Pancreas (tissue), 10 donors: ENCODE measurements at regions of chr6 and their contacts with region 1.

Region 1: GRCh38 chr6:55953335-55953734 is 77.9 kb upstream of the BMP5 start:
- DNase-seq: no peak
- ATAC-seq: peak; percentile 50 to 82 (median 78)
- H3K4me3 ChIP-seq: no peak overlapping the region
- H3K27ac ChIP-seq: no peak overlapping the region
- H3K4me1 ChIP-seq: peaks cover 0 to 5% (median 0%) of the 10 kb centered on the region in 3 donors
- H3K27me3 ChIP-seq: peaks cover 0 to 4% (median 0%) of the 10 kb centered on the region in 4 donors
- CTCF ChIP-seq: peak in 3 of 4 donors; percentile 7 to 20 (median 17)

Region 2: DNA sequence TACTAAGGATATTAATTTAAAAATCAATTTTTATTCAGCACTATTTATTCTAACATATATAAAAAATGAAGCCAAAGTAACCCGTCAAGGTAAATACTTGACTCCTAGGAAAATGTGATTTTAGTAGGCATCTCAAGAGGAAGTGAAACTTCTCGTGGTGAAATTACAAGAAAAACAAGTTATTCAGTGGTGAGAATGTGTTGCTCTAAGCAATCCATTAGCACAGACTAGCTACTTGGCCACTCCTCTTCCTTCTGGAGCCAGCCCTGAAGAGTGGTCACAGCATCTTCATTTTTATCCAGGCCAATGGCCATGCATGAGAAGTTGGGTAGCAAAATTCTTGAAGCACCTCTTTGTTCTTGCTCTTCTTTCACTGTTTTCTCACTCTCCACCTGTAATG is 666.5 kb before region 1 on chr6:
- intact Hi-C with region 1: loop called in 1 of 3 experiments (anchors 10 kb)
- DNase-seq: no peak
- ATAC-seq: no peak
- H3K4me3 ChIP-seq: no peak overlapping the region
- H3K27ac ChIP-seq: no peak overlapping the region
- H3K4me1 ChIP-seq: no peaks in the 10 kb centered on the region
- H3K27me3 ChIP-seq: no peaks in the 10 kb centered on the region
- CTCF ChIP-seq: no peak

Region 3: GRCh38 chr6:55445648-55446204 is 507.6 kb before region 1 on chr6:
- intact Hi-C with region 1: loop called in 1 of 3 experiments (anchors 10 kb)
- DNase-seq: no peak
- ATAC-seq: peak in 3 of 4 donors; percentile 44 to 70 (median 46)
- H3K4me3 ChIP-seq: no peak overlapping the region
- H3K27ac ChIP-seq: no peak overlapping the region
- H3K4me1 ChIP-seq: peaks cover 0 to 24% (median 20%) of the 10 kb centered on the region in 3 donors
- H3K27me3 ChIP-seq: no peaks in the 10 kb centered on the region
- CTCF ChIP-seq: peak in 2 of 4 donors; percentile 23 to 44

Region 4: GRCh38 chr6:55578537-55579363 is 374.6 kb before region 1 on chr6 and contains the start of gene HMGCLL1:
- intact Hi-C with region 1: no loop called
- DNase-seq: peak; percentile 21 to 81 (median 38)
- ATAC-seq: peak; percentile 71 to 98 (median 96)
- H3K4me3 ChIP-seq: peak within 1 kb of the TSS; percentile 2 to 47 (median 18)
- H3K27ac ChIP-seq: peak within 1 kb of the TSS in 1 of 4 donors; percentile 28
- H3K4me1 ChIP-seq: no peaks in the 10 kb centered on the region
- H3K27me3 ChIP-seq: no peaks in the 10 kb centered on the region
- CTCF ChIP-seq: no peak
- total RNA-seq, gene HMGCLL1: 0.69 to 2.3 (median 0.95) TPM